Aorta (tissue), 5 donors: ENCODE measurements at regions of chr3 and their contacts with region 1.

Region 1: GRCh38 chr3:98817547-98818041 is 54.5 kb downstream of the ST3GAL6 start:
- DNase-seq: no peak
- ATAC-seq: peak; percentile 88
- H3K4me3 ChIP-seq: no peak overlapping the region
- H3K27ac ChIP-seq: no peak overlapping the region
- H3K4me1 ChIP-seq: no peaks in the 10 kb centered on the region
- H3K27me3 ChIP-seq: no peaks in the 10 kb centered on the region

Region 2: DNA sequence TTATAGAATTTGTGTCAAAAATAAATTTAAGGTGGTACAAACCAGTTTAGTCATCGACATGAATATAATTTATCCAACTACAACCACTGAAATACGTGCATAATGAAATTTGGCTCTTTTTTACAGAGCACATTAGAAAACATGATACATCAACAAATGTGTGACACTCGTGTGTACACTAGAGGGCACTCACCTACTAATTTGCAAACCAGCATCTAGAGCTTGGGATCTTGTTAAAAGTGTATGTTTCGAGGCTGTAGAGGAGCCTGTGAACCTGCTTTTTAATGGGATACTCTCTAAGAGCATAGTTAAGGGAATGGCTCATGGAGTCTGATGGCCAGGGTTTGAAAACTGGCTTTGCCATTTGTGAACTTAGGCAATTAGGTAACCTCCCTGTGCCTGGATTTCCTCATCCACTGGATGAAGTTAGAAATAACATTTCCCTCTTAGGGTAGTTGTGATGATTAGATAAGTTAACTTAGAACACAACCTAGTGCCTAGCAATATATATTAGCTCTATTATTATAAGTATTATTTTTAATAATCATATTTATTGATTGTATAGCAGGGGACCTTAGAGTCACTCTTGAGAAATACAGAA is 215.4 kb before region 1 on chr3:
- intact Hi-C with region 1: loop called (anchors 2 kb)
- DNase-seq: no peak
- ATAC-seq: peak; percentile 74
- H3K4me3 ChIP-seq: no peak overlapping the region
- H3K27ac ChIP-seq: no peak overlapping the region
- H3K4me1 ChIP-seq: no peaks in the 10 kb centered on the region
- H3K27me3 ChIP-seq: no peaks in the 10 kb centered on the region

Region 3: DNA sequence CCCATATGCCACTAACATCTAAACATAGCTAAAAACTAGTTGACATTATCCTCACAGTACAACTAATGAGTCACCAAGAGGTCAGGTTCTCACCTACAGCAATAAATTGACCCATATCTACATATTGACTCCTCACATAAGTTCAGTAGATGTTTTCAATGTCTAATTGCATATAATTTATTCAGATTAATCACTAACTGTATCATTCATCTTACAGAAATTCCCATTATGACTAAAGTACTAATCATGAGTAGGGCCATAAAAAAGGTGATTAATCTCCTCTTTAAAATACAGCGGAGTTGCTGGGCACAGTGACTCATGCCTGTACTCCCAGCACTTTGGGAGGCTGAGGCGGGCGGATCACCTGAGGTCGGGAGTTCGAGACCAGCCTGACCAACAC is 136.9 kb before region 1 on chr3:
- intact Hi-C with region 1: no loop called
- DNase-seq: no peak
- ATAC-seq: no peak
- H3K4me3 ChIP-seq: no peak overlapping the region
- H3K27ac ChIP-seq: no peak overlapping the region
- H3K4me1 ChIP-seq: no peaks in the 10 kb centered on the region
- H3K27me3 ChIP-seq: no peaks in the 10 kb centered on the region

Region 4: DNA sequence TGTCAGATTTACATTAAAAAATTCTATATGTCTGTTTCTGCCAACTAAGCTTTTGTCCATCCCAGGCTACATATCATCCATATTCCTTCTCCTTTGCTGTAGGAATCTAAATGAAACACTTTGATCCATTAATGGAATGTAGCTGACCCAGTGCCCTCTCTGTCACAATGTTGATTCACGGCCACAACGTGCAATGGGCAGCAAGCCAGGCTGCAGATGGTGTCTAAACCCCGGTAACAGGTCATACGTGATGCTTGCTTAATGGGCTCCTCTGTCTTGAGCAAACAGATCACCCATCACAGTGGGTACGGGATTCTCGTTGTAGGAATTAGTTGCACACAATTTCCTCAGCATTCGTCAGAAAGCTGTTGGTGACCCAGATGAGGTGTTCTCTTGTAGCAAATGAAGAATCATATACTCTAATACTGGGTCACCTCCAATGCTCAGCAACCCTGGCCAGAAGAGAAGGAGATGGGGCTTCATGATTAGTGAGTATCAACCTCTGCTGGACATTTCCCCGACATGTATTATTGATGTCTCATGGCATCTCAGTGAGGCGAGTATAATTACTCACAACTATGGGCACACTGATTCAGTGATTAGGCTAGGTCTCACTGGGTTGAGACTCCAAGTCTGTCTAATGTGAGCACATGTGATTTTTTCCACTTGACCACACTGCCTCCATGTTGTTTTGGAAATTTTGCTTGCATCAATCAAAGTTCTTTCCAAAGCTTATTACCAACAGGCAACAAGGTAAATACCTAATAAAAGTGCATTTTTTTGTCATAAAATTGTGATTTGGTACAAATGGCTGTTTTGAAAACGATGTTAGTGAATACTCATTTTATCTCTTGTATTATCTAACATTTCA is 96.9 kb after region 1 on chr3:
- intact Hi-C with region 1: no loop called
- DNase-seq: no peak
- ATAC-seq: no peak
- H3K4me3 ChIP-seq: no peak overlapping the region
- H3K27ac ChIP-seq: no peak overlapping the region
- H3K4me1 ChIP-seq: no peaks in the 10 kb centered on the region
- H3K27me3 ChIP-seq: no peaks in the 10 kb centered on the region

Region 5: DNA sequence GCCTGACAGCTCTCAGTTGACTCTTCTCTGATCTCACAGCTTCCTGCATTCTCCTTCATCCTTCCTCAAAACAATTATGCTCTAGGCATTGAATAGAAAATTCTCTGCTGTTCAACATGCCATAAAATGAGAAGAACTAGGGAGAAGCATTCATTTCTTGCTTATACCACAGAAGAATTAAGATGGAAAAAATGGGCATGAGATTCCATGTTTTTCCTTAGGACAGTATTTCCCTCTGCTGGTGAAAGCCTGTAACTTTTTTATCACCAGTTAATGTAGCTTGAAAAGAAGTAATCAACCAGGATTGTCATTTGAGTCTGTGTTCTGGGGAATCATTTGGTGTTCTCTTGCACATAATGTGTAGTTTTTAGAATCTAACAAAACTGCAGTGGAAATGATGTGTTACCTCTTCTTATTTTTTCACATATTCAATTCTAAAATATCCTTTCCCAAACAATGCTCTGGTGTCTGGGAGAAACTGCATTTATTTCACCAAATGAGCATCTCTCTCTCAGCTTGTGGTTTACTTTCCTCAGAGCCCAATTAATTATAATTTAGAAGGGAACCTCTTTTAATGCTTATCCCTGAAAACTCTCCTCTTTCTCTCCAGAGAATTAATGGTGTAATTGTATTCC is 176.7 kb after region 1 on chr3:
- intact Hi-C with region 1: loop called (anchors 1 kb)
- DNase-seq: no peak
- ATAC-seq: no peak
- H3K4me3 ChIP-seq: no peak overlapping the region
- H3K27ac ChIP-seq: no peak overlapping the region
- H3K4me1 ChIP-seq: no peaks in the 10 kb centered on the region
- H3K27me3 ChIP-seq: no peaks in the 10 kb centered on the region

Region 6: GRCh38 chr3:99808151-99808794 is 990.7 kb after region 1 on chr3:
- intact Hi-C with region 1: loop called in 1 of 2 experiments (anchors 10 kb)
- DNase-seq: no peak
- ATAC-seq: peak; percentile 58
- H3K4me3 ChIP-seq: no peak overlapping the region
- H3K27ac ChIP-seq: no peak overlapping the region
- H3K4me1 ChIP-seq: no peaks in the 10 kb centered on the region
- H3K27me3 ChIP-seq: no peaks in the 10 kb centered on the region